CD8-positive, alpha-beta T cell (primary cell): ENCODE measurements at regions of chr1 and their contacts with region 1.

Region 1: DNA sequence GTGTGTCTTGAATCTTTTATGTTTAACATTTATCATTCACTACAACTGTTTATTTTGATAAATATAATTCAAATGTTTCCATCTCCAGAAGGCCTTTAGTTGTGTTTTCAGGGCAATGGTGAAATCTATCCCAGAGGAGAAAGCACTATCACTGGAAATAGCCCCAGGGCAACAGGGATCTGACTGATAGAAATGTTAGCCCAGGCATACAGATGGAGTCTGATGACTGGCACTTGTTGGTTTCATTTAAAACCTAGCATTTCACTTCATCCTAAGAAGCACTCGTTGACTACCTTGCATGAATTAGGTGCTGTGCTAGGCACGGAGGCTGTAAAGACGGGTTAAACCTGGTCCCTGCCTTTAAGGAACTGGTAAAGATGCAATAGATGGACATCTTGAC is 103.1 kb downstream of the C1orf21 start:
- DNase-seq: no peak
- ATAC-seq: no peak
- H3K4me3 ChIP-seq: no peak overlapping the region
- H3K4me3 Mint-ChIP-seq: no peak overlapping the region
- H3K27ac ChIP-seq: peak overlapping the region in 1 of 2 experiments; percentile 85
- H3K27ac Mint-ChIP-seq: no peak overlapping the region
- H3K4me1 ChIP-seq: peaks cover 10% of the 10 kb centered on the region
- H3K4me1 Mint-ChIP-seq: peaks cover 12% of the 10 kb centered on the region
- H3K27me3 ChIP-seq: no peaks in the 10 kb centered on the region
- H3K27me3 Mint-ChIP-seq: no peaks in the 10 kb centered on the region
- CTCF ChIP-seq: no peak

Region 2: DNA sequence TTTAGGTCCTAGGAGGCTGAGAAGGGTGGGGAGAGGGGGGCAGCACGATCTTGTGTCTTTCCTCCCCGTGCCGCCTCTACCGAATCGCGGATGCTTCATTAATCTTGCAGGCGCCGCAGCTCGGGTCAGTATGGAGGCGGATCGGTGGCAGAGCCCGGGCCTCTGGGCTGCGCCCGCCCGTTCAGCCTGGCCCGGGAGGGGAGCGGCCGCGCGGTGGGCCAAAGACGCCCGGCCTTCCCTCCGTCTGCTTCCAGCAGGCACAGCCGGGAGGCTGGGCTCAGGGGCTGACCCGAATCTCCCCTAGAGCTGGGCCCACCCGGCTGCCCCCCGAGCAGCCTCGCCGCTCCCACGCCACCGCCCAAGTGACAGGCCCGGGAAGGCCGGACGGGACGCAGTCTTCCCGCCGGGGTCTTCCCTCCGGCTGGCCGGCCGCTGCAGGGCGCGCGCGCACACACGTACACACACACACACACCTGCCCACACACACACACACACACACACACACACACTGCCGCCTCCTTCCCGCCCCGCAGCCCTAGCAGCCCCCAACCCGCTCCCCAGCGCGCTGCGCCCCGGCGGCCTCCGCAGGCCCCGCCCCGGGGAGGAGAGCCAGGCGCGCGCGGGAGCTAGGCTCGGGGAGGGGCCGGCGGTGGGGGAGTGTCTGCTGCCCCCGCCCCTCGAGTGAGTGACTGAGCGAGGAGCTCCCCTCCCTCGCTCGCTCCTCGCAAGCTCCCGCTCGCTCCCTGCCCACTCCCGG is 103.4 kb before region 1 on chr1 and contains the start of gene C1orf21:
- CTCF ChIA-PET with region 1: no interaction called
- POLR2A ChIA-PET with region 1: no interaction called
- intact Hi-C with region 1: loop called in 1 of 2 experiments (anchors 2 kb)
- DNase-seq: peak; percentile 40 to 89 (median 66)
- ATAC-seq: peak; percentile 83
- H3K4me3 ChIP-seq: peak within 1 kb of the TSS; percentile 59 to 74
- H3K4me3 Mint-ChIP-seq: peak within 1 kb of the TSS; percentile 84
- H3K27ac ChIP-seq: peak within 1 kb of the TSS; percentile 63 to 88
- H3K27ac Mint-ChIP-seq: peak within 1 kb of the TSS; percentile 83
- H3K4me1 ChIP-seq: peaks cover 10% of the 10 kb centered on the region
- H3K4me1 Mint-ChIP-seq: peaks cover 18% of the 10 kb centered on the region
- H3K27me3 ChIP-seq: peaks cover 2 to 7% of the 10 kb centered on the region in 2 experiments
- H3K27me3 Mint-ChIP-seq: peaks cover 38% of the 10 kb centered on the region
- CTCF ChIP-seq: no peak
- total RNA-seq, gene C1orf21: 2.3 to 3.5 TPM

Region 3: DNA sequence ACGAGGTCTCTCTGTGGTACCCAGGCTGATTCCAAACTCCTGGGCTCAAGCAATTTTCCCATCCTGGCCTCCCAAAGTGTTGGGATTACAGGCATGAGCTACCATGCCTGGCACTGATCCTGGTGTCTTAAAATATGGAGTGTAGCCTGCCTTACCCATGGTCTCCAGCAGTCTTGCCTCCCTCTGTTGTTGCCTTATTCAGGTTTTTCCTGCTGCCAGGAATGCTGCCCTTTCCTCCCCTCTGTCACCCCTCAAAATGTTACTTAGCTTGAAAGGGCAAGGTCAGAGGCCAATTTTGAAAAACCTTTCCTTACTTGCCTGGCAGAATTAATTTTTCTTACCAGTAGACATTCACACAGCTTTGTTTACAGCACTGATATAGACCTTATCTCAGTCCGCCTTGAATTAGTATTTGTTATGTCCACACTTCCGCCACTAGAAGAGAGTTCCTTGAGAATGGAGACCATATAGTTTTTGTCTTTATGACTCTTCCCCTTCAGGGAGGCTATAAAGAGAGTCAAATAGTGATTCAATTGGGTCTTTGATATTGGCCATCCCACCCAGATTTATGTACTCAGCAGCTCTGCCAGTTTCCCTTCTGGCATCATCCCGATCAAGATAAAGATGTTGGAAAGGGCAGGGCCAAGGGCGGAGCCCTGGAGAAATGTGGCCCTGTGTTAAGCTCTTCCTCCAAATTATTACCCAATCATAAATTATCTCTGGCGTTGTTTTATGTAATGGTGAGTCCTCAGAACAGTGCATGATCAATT is 64.3 kb before region 1 on chr1:
- CTCF ChIA-PET with region 1: no interaction called
- POLR2A ChIA-PET with region 1: no interaction called
- intact Hi-C with region 1: no loop called
- DNase-seq: no peak
- ATAC-seq: no peak
- H3K4me3 ChIP-seq: no peak overlapping the region
- H3K4me3 Mint-ChIP-seq: no peak overlapping the region
- H3K27ac ChIP-seq: no peak overlapping the region
- H3K27ac Mint-ChIP-seq: no peak overlapping the region
- H3K4me1 ChIP-seq: no peaks in the 10 kb centered on the region
- H3K4me1 Mint-ChIP-seq: no peaks in the 10 kb centered on the region
- H3K27me3 ChIP-seq: no peaks in the 10 kb centered on the region
- H3K27me3 Mint-ChIP-seq: peaks cover 2% of the 10 kb centered on the region
- CTCF ChIP-seq: no peak

Region 4: DNA sequence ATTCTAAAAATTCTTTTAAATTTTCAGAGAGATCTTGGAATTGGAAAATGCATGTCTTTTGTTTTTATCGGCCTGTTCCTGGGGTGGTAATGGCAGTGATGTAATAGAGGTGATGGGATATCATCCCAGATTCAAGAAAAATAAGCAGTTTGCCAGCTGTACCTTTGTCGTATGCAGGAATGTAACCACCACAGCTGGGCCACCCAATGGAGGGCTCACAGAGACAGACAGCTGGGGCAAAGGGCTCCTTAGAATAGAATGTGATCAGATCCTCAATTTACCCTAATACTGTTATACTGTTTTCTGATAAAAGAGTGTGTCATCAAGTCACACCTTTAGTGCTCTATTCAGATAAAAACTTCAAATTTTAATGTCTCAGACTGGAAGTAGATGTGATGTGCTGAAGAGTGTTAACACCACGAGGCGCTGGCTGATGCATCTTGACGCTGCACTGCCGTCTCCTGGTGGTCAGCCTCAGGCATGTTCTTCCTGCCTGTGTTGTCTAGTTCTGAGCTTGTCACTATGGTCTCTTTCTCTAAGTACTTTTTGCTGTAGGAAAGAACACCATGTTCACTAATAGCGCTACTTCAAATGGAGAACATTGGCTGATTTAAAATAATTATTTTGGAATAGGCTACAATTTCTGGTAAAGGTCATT is 24.3 kb before region 1 on chr1:
- CTCF ChIA-PET with region 1: no interaction called
- POLR2A ChIA-PET with region 1: no interaction called
- intact Hi-C with region 1: no loop called
- DNase-seq: peak in 3 of 9 experiments; percentile 10 to 51 (median 44)
- ATAC-seq: no peak
- H3K4me3 ChIP-seq: no peak overlapping the region
- H3K4me3 Mint-ChIP-seq: no peak overlapping the region
- H3K27ac ChIP-seq: no peak overlapping the region
- H3K27ac Mint-ChIP-seq: no peak overlapping the region
- H3K4me1 ChIP-seq: no peaks in the 10 kb centered on the region
- H3K4me1 Mint-ChIP-seq: no peaks in the 10 kb centered on the region
- H3K27me3 ChIP-seq: no peaks in the 10 kb centered on the region
- H3K27me3 Mint-ChIP-seq: peaks cover 5% of the 10 kb centered on the region
- CTCF ChIP-seq: no peak

Region 5: DNA sequence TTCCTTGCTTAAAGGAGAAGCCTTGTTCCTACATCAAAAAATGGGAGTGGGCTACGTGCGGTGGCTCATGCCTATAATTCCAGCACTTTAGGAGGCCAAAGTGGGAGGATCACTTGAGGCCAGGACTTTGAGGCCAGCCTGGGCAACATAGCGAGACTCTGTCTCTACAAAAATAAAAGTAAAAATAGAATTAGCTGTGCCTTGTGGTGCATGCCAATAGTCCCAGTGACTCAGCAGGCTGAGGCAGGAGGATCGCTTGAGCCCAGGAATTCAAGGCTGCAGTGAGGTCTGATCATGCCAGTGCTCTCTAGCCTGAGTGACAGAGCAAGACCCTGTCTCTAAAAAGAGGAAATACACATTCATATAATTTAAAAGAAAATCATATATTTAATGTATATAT is 24.1 kb after region 1 on chr1:
- CTCF ChIA-PET with region 1: no interaction called
- POLR2A ChIA-PET with region 1: no interaction called
- intact Hi-C with region 1: no loop called
- DNase-seq: no peak
- ATAC-seq: no peak
- H3K4me3 ChIP-seq: no peak overlapping the region
- H3K4me3 Mint-ChIP-seq: no peak overlapping the region
- H3K27ac ChIP-seq: no peak overlapping the region
- H3K27ac Mint-ChIP-seq: no peak overlapping the region
- H3K4me1 ChIP-seq: no peaks in the 10 kb centered on the region
- H3K4me1 Mint-ChIP-seq: no peaks in the 10 kb centered on the region
- H3K27me3 ChIP-seq: no peaks in the 10 kb centered on the region
- H3K27me3 Mint-ChIP-seq: no peaks in the 10 kb centered on the region
- CTCF ChIP-seq: no peak

Region 6: GRCh38 chr1:185044981-185045813 is 555.3 kb after region 1 on chr1 and contains the start of gene RNF2:
- CTCF ChIA-PET with region 1: no interaction called
- POLR2A ChIA-PET with region 1: no interaction called
- intact Hi-C with region 1: no loop called
- DNase-seq: peak; percentile 61 to 95 (median 84)
- ATAC-seq: peak; percentile 91
- H3K4me3 ChIP-seq: peak within 1 kb of the TSS; percentile 74 to 85
- H3K4me3 Mint-ChIP-seq: peak within 1 kb of the TSS; percentile 92
- H3K27ac ChIP-seq: peak within 1 kb of the TSS; percentile 62 to 81
- H3K27ac Mint-ChIP-seq: peak within 1 kb of the TSS; percentile 93
- H3K4me1 ChIP-seq: peaks cover 23% of the 10 kb centered on the region
- H3K4me1 Mint-ChIP-seq: peaks cover 46% of the 10 kb centered on the region
- H3K27me3 ChIP-seq: no peaks in the 10 kb centered on the region
- H3K27me3 Mint-ChIP-seq: no peaks in the 10 kb centered on the region
- CTCF ChIP-seq: no peak
- total RNA-seq, gene RNF2: 13.3 to 13.6 TPM